ENCODE measurements at regions of chr9 and their contacts with region 1.

Region 1: DNA sequence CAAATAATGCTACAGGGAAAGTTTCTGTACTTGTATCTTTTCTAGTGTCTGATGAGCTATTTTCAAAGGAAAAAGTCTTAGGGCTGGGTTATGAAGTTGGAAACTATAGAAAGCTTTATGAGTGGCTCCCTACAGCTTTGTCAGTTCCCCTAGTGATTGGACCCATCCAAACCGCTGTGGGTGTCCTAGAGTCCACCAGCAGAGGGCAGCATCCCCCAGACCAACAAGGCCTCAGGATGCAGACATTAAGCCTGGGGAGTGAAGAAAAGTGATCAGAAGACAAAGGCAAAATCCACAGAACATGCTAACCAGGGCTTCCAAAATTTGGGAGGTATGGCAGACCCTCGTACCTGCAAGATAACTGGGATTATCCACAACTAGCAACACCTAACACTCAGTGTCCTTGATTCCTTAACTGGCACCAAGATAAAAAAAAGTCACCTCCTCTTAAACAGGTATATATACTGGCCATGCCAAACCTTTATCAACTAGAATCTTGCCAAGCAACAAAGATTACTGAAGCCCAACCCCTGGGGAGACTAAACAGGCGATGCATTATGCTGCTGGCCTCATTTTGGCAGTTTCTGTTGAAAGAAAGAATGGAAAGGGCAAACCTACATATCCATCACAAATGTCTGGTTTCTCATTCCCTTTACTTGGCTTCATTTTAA is 110.4 kb upstream of the NR5A1 start:
- DNase-seq: peak; percentile 82 to 87 (median 82)
- ATAC-seq: peak; percentile 99
- H3K4me3 ChIP-seq: no peak overlapping the region
- H3K27ac ChIP-seq: no peak overlapping the region
- H3K4me1 ChIP-seq: no peaks in the 10 kb centered on the region; a peak in 3 of 5 replicates
- H3K27me3 ChIP-seq: no peaks in the 10 kb centered on the region
- CTCF ChIP-seq: peak; percentile 93 to 96 (median 94)
- EP300 ChIP-seq: no peak
- POLR2A ChIP-seq: no peak
- RAD21 ChIP-seq: peak; percentile 94 to 97

Region 2: DNA sequence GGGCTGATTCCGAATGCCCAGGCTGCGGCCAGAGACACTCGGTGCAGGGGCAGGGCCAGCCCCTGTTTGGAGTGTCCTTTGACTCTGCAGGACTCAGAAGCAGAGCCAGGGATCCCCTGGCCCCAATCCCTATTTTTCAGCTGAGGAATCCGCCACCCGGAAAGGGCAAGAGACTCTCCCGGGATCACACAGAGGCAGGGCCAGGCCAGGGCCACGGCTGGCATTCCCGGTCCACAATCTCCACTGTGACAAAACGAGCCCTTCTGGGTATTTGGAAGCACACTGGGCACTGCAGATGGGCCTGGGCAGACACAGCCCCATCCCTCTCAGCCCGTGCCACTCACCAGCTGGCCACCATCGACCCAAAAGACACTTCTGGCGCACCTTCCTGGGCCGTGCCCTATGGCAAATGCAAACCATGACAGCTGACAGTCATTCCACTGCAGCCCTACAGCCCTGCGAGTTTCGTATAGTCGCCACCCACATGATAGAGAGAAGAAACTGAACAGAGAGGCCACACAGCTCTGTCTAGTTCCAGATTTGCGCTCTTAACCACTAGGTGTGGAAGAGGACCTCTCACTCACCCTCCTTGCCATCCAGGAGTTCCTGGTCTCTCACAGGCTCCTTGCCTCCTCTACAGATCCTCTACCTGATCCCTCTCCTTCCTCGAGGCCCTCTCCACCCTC is 123.7 kb before region 1 on chr9:
- CTCF ChIA-PET with region 1: no interaction called
- POLR2A ChIA-PET with region 1: no interaction called
- in situ Hi-C with region 1: no loop called
- intact Hi-C with region 1: no loop called
- DNase-seq: no peak
- ATAC-seq: no peak
- H3K4me3 ChIP-seq: no peak overlapping the region
- H3K27ac ChIP-seq: no peak overlapping the region
- H3K4me1 ChIP-seq: peaks cover 11 to 55% of the 10 kb centered on the region in 2 experiments; a peak in 3 of 5 replicates
- H3K27me3 ChIP-seq: peaks cover 8 to 82% of the 10 kb centered on the region in 2 experiments; a peak in 4 of 5 replicates
- CTCF ChIP-seq: no peak
- EP300 ChIP-seq: no peak
- POLR2A ChIP-seq: no peak
- RAD21 ChIP-seq: no peak

Region 3: GRCh38 chr9:124602204-124602603 is 15.4 kb before region 1 on chr9:
- CTCF ChIA-PET with region 1: no interaction called
- POLR2A ChIA-PET with region 1: no interaction called
- in situ Hi-C with region 1: no loop called
- intact Hi-C with region 1: no loop called
- DNase-seq: no peak
- ATAC-seq: no peak
- H3K4me3 ChIP-seq: no peak overlapping the region
- H3K27ac ChIP-seq: no peak overlapping the region
- H3K4me1 ChIP-seq: peaks cover 2 to 3% of the 10 kb centered on the region in 2 experiments; a peak in 2 of 5 replicates
- H3K27me3 ChIP-seq: no peaks in the 10 kb centered on the region
- CTCF ChIP-seq: no peak
- EP300 ChIP-seq: no peak
- POLR2A ChIP-seq: no peak
- RAD21 ChIP-seq: no peak

Region 4: GRCh38 chr9:124632077-124632621 is 14.5 kb after region 1 on chr9:
- CTCF ChIA-PET with region 1: no interaction called
- POLR2A ChIA-PET with region 1: interaction called, 11 read pairs
- in situ Hi-C with region 1: no loop called
- intact Hi-C with region 1: no loop called
- DNase-seq: no peak
- ATAC-seq: no peak
- H3K4me3 ChIP-seq: no peak overlapping the region
- H3K27ac ChIP-seq: peak overlapping the region; percentile 10; the same call in 1 of the 3 replicates
- H3K4me1 ChIP-seq: peaks cover 0 to 6% of the 10 kb centered on the region in 2 experiments; a peak in 1 of 5 replicates
- H3K27me3 ChIP-seq: no peaks in the 10 kb centered on the region
- CTCF ChIP-seq: no peak
- EP300 ChIP-seq: no peak
- POLR2A ChIP-seq: no peak
- RAD21 ChIP-seq: no peak

Region 5: DNA sequence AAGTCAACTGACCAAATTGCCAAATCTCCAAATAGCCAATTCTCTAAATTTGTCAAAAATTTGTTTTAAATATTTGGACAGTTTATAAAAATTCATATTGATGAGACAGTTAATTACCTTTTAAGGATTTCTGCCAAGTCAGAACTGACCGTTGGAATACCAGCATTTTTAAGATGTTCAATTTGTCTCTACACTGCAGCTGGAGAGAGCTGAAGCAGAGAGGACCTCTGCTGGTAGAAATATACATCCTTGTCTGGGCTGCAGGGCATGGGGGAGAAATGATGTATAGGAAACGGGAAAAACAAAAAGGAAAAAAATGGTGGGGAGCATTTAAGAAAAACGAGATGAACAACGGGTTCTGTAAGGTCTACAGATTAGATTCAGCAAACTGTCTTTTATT is 136.7 kb after region 1 on chr9:
- CTCF ChIA-PET with region 1: interaction called, 4 read pairs
- POLR2A ChIA-PET with region 1: interaction called, 3 read pairs
- in situ Hi-C with region 1: no loop called
- intact Hi-C with region 1: loop called (anchors 2 kb)
- DNase-seq: peak in 3 of 4 experiments; percentile 27 to 60 (median 44)
- ATAC-seq: peak; percentile 83
- H3K4me3 ChIP-seq: no peak overlapping the region
- H3K27ac ChIP-seq: peak overlapping the region; percentile 68; the same call in 2 of the 3 replicates
- H3K4me1 ChIP-seq: peaks cover 0 to 40% of the 10 kb centered on the region in 2 experiments; a peak in 3 of 5 replicates
- H3K27me3 ChIP-seq: no peaks in the 10 kb centered on the region
- CTCF ChIP-seq: peak; percentile 64 to 75 (median 75)
- EP300 ChIP-seq: peak; percentile 52
- POLR2A ChIP-seq: no peak
- RAD21 ChIP-seq: peak; percentile 72 to 81

Region 6: DNA sequence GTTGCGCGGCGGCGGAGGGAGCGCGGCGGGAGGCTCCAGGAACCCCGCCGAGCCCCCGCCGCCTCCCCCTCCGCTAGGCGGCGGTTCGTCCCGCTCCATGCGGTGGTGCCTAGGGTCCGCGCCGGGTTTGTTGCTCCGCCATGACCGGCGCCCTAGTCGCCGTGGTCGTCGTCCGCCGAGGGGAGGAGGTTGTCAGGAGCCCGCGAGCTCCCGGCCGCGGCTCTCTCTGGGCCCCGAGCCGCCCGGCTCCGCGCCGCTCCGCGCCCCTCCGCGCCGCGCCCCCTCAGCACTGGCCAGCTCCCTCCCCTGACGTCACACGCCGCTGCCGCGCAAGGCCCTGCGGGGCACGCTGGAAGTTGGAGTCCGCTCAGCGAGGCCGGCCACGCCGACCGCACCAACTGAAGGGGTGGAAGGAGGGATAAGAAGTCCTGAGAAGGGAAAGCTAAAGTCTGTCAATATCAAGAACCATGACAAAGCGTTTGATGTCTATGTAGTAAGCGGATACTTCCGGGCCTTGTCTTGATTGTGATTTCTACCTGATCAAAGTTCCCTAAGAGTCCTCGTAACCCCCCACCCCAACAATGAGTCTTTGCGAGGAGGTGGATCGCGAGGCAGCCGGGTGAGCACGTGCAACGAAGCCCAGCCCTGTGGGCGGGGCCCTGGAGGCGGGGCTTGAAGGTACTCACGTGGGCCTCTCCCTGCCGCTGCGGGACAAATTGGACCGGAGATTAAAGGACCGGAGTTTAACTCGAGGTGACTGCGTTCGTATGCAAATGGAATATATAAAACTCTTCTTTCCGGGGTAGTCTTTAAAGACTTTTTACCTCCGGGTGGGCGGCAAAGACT is 153.6 kb after region 1 on chr9 and contains the start of gene NR6A1:
- CTCF ChIA-PET with region 1: no interaction called
- POLR2A ChIA-PET with region 1: no interaction called
- in situ Hi-C with region 1: no loop called
- intact Hi-C with region 1: loop called (anchors 2 kb)
- DNase-seq: peak; percentile 95 to 98 (median 96)
- ATAC-seq: peak; percentile 86
- H3K4me3 ChIP-seq: peak within 1 kb of the TSS; percentile 48
- H3K27ac ChIP-seq: peak within 1 kb of the TSS; percentile 93
- H3K4me1 ChIP-seq: peaks cover 11 to 14% of the 10 kb centered on the region in 2 experiments
- H3K27me3 ChIP-seq: no peaks in the 10 kb centered on the region
- CTCF ChIP-seq: peak; percentile 16 to 33 (median 22); a peak in 3 of 6 replicates
- EP300 ChIP-seq: 0 out of 2 replicates have a peak, but pooled peaks have one; percentile 3
- POLR2A ChIP-seq: peak; percentile 60
- RAD21 ChIP-seq: no peak
- polyA plus RNA-seq, gene NR6A1: 9.7 to 17.7 TPM

Region 7: DNA sequence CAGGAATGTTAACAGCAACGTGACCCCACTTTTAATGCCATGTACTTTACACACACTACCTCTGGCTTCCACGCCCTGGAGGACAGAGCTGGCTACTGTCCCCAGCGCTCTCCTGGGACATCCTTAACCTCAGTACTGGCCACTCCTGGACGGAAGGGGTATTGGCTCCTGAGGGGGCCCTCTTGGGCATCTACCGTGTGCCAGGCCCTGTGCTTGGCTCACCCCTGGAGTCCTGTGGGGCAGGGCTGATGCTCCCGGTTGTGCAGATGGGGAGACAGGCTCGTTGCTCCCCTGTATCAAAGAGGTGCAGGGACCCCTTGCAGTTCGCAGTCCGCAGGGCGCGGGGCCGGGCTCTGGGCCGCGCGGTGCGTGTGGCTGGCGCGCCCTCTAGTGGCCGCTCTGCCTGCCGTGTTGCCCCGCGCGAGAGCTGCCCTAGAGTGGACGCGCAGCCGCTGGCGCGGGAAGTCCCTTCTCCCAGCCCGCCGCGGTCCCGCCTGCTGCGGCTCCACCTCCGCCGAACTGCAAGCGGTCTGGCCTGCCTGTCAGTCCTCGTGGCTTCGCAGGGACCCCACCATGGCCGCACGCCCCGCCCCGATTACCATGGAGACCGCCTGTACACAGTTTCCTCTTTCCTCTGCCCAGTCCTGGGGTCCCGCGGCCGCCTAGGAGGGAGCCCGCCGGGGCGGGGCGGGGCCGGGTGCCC is 235.4 kb after region 1 on chr9 and contains the start of gene WDR38:
- CTCF ChIA-PET with region 1: interaction called, 6 read pairs
- POLR2A ChIA-PET with region 1: interaction called, 3 read pairs
- in situ Hi-C with region 1: no loop called
- intact Hi-C with region 1: loop called (anchors 5 kb)
- DNase-seq: peak; percentile 83 to 92 (median 86)
- ATAC-seq: peak; percentile 90
- H3K4me3 ChIP-seq: peak within 1 kb of the TSS; percentile 36
- H3K27ac ChIP-seq: no peak within 1 kb of the TSS
- H3K4me1 ChIP-seq: peaks cover 0 to 46% of the 10 kb centered on the region in 2 experiments; a peak in 3 of 5 replicates
- H3K27me3 ChIP-seq: no peaks in the 10 kb centered on the region
- CTCF ChIP-seq: peak; percentile 77 to 98 (median 93)
- EP300 ChIP-seq: no peak
- POLR2A ChIP-seq: no peak
- RAD21 ChIP-seq: peak; percentile 99 to 100
- polyA plus RNA-seq, gene WDR38: not detected